Endothelial cell of umbilical vein (primary cell): ENCODE measurements at regions of chr9 and their contacts with region 1.

Region 1: DNA sequence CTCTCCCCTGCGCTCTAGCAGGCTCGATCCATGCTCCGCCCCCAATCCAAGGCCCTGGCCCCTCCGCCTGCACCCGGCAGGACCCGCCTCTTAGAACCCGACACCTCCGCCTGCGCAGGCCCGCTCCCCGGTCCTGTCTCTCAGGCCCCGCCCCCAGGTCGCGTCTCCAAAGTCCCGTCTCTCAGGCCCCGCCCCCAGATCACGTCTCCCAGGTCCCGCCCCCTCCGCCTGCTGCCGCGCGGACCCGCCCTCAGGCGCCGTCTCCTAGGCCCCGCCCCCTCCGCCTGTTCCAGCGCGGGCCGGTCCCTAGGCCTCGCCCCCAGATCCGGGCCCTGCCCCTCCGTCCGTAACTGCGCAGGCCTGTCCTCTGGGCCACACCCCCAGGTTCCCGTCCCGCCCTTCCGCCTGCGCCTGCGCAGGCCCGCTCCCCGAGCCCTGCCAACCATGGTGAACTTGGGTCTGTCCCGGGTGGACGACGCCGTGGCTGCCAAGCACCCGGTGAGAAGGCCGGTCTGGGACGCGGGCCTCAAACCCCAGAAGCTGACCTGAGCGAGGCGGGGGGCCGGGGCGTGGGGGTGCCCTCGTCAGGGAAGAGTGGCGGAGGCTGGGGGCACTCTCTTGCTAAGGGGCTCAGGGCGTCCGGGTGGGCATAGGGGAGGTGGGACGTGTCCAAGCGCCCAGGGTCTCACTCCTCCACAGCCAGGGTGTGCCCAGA is at the start of gene TMEM141:
- DNase-seq: peak; percentile 99
- H3K4me3 ChIP-seq: peak within 1 kb of the TSS; percentile 54 to 72 (median 59)
- H3K27ac ChIP-seq: peak within 1 kb of the TSS; percentile 31
- H3K4me1 ChIP-seq: peaks cover 7% of the 10 kb centered on the region
- H3K27me3 ChIP-seq: peaks cover 2 to 6% of the 10 kb centered on the region in 2 experiments
- CTCF ChIP-seq: no peak
- POLR2A ChIP-seq: peak; percentile 89
- total RNA-seq, gene TMEM141: 43.2 and 44.9 TPM in 2 replicates

Region 2: GRCh38 chr9:136849038-136849959 is 58.2 kb after region 1 on chr9 and contains the start of gene PHPT1:
- CTCF ChIA-PET with region 1: no interaction called
- POLR2A ChIA-PET with region 1: no interaction called
- dilution Hi-C with region 1: no loop called
- intact Hi-C with region 1: loop called (anchors 5 kb)
- DNase-seq: peak; percentile 99
- H3K4me3 ChIP-seq: peak within 1 kb of the TSS; percentile 29 to 90 (median 54)
- H3K27ac ChIP-seq: no peak within 1 kb of the TSS
- H3K4me1 ChIP-seq: peaks cover 10% of the 10 kb centered on the region
- H3K27me3 ChIP-seq: peaks cover 8 to 23% of the 10 kb centered on the region in 2 experiments
- CTCF ChIP-seq: no peak
- POLR2A ChIP-seq: peak; percentile 97
- total RNA-seq, gene PHPT1: 139 and 165 TPM in 2 replicates

Region 3: DNA sequence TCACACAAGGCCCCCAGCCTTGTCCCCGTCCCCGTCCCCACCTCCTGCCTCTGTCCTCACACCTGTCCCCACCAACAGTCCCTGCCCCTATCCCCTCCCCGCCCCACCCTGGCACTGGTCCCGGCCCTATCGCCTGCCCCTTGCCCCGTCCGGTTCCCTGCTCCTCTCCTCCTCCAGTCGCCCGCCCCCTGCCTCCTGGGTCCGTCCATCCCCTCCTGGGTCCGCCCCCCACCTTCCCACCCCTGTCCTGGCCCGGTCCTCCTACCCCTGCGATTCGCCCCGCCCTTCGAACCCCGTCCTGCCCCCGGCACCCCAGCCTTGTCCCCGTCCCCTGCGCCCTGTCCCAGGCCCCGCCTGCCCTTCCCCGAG is 74.6 kb after region 1 on chr9:
- CTCF ChIA-PET with region 1: no interaction called
- POLR2A ChIA-PET with region 1: no interaction called
- dilution Hi-C with region 1: no loop called
- intact Hi-C with region 1: no loop called
- DNase-seq: no peak
- H3K4me3 ChIP-seq: peak overlapping the region; percentile 48 to 98 (median 54)
- H3K27ac ChIP-seq: no peak overlapping the region
- H3K4me1 ChIP-seq: peaks cover 6% of the 10 kb centered on the region
- H3K27me3 ChIP-seq: no peaks in the 10 kb centered on the region
- CTCF ChIP-seq: no peak
- POLR2A ChIP-seq: no peak

Region 4: DNA sequence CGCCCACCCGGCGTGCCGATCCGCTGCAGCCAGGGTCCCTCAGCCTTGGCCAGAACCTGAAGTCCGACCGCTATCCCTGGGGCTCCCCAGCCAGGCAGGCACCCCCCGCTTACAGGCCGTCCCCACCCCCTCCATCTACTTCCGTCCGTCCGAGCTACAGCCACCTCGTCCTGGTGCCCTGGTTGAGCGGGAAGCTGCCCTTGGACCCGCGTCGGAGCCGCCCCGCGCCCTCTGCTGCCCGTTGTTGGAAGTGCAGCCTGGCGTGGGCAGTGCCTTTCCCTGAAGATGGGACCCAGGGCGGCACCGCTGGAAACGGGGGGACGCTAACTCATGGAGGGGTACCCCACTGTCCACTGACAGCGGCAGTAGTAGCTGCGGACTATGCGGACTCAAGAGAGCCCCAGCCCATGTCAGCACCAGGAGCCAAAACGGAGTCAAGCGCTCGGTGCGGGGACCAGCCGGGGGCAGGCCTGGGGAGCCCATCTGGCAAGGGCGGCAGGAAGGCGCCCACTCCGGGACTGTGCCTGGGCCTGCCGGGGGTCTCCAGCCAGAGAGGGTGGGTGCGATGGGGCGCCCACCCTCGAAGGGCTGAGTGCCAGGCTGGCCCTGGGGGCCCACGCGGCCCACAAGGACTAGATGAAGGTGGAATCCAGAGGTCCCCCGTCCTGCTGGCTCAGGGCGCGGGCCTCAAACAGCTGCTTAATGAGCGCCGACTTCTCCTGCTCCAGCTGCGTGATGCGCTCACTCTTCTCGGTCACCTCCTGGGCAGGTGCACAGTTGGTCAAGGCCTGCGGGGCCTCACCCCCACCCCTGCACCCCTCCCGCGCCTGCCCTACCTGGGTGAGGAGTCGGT is 273.2 kb after region 1 on chr9:
- CTCF ChIA-PET with region 1: interaction called, 7 read pairs
- POLR2A ChIA-PET with region 1: no interaction called
- dilution Hi-C with region 1: no loop called
- intact Hi-C with region 1: loop called (anchors 1 kb)
- DNase-seq: peak; percentile 31
- H3K4me3 ChIP-seq: no peak overlapping the region
- H3K27ac ChIP-seq: no peak overlapping the region
- H3K4me1 ChIP-seq: peaks cover under 1% of the 10 kb centered on the region
- H3K27me3 ChIP-seq: no peaks in the 10 kb centered on the region
- CTCF ChIP-seq: peak; percentile 86 to 97
- POLR2A ChIP-seq: no peak